GM13976 (cell line): ENCODE measurements at regions of chr18 and their contacts with region 1.

Region 1: GRCh38 chr18:62186774-62187542 is at the starts of genes PIGN and RELCH:
- DNase-seq: peak; percentile 98
- CTCF ChIP-seq: no peak

Region 2: GRCh38 chr18:61159246-61159645 is 1027.7 kb before region 1 on chr18:
- in situ Hi-C with region 1: no loop called
- DNase-seq: no peak
- CTCF ChIP-seq: no peak

Region 3: GRCh38 chr18:62425465-62426195 is 238.7 kb after region 1 on chr18:
- in situ Hi-C with region 1: loop called (anchors 25 kb)
- DNase-seq: peak; percentile 45
- CTCF ChIP-seq: peak; percentile 64

Region 4: DNA sequence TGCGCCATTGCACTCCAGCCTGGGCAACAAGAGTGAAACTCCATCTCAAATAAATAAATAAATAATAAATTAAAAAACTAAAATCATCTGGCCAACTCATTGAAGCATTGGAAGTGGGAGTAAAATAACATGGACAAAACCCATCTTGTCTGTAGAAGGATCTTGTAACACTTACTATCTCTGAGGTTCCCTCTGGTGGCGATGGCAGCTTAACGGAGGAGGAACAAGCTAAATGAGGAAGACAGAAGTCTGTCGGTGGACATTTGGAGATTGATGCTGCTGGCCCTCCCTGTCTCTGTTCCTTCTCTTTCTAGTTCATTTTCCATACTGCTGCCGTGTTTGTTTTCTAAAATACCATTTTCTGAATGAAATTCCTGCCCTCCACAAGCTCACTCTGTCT is 379.2 kb after region 1 on chr18:
- in situ Hi-C with region 1: loop called (anchors 25 kb)
- DNase-seq: no peak
- CTCF ChIP-seq: no peak

Region 5: DNA sequence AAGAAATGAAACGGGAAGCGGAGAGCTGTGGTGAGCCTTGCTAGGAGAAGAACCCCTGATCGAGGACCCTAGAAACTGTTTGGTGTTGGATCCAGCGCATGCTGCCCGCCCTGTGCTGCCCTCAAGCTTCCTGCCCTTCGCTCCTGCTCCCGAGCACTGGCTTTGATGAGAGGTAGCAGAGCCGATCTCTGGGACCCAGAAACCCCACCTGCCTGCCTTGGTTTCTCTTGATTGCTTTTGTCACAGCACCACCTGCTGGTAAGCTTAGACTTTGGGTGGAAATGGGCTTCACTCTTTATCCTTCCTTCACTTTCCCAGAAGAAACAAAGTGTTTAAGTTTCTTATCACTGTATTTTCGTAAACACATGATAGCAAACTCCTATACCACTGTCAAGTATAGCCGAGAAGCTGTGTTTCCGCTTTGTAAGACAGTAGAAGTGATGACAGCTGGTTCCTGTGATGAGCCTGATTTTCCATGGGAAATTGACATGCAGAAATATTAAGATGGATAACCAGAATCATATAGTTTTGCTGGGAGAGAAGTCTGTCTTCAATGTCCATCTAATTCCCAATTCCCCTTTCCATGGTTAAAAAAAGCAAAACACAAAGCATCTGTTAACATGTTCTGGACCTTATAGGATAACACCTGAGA is 795.8 kb after region 1 on chr18:
- in situ Hi-C with region 1: loop called (anchors 25 kb)
- DNase-seq: peak; percentile 82
- CTCF ChIP-seq: peak; percentile 74